ENCODE measurements at regions of chr15 and their contacts with region 1.

Region 1: GRCh38 chr15:78859971-78860732 is 12.5 kb upstream of the MORF4L1 start:
- DNase-seq: peak; percentile 88
- ATAC-seq: peak; percentile 79
- H3K4me3 Mint-ChIP-seq: peak overlapping the region; percentile 77
- H3K27ac Mint-ChIP-seq: peak overlapping the region; percentile 78
- H3K4me1 Mint-ChIP-seq: peaks cover 8% of the 10 kb centered on the region
- H3K27me3 Mint-ChIP-seq: no peaks in the 10 kb centered on the region

Region 2: DNA sequence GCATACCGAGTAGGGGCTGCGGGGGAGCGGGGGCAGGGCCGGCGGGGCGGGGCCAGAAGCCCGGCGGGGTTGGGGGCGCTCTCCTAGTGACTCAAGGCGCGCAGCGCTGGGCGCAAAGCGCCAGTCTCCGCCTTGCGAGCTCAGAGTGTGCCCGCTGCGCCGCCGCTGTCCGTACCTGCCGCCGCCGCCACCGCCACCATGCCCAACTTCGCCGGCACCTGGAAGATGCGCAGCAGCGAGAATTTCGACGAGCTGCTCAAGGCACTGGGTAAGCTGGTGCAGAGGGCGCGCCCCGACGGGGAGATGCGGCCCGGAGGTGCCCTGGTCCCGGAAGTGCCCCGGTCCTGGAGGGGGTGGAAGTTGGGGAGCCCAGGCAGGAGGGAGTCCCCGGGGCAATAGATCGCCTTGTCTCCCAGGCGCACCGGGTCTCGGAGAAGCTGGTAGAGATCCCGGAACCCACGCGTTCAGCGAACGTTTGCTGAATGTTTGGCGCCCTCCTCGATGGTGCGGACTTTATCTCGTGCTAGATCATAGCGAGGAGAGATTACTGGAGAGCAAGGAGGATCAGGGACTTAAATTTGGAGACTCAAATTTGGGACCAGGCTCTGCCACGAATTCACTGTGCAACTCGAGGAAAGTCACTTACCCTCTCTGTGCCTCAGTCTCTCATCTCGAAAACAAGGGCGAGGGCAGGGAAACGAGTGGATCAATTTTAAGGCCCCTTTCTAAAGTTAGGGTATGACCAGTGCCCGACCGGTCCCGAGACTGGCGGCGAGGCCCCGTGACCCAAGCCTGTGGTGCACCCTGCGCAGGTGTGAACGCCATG is 519.7 kb before region 1 on chr15 and contains the start of gene CRABP1:
- CTCF ChIA-PET with region 1: no interaction called
- POLR2A ChIA-PET with region 1: no interaction called
- intact Hi-C with region 1: no loop called
- DNase-seq: peak; percentile 50
- ATAC-seq: peak; percentile 39
- H3K4me3 Mint-ChIP-seq: peak within 1 kb of the TSS; percentile 11
- H3K27ac Mint-ChIP-seq: no peak within 1 kb of the TSS
- H3K4me1 Mint-ChIP-seq: peaks cover 3% of the 10 kb centered on the region
- H3K27me3 Mint-ChIP-seq: peaks cover 47% of the 10 kb centered on the region
- total RNA-seq, gene CRABP1: 0.90 to 0.96 TPM

Region 3: DNA sequence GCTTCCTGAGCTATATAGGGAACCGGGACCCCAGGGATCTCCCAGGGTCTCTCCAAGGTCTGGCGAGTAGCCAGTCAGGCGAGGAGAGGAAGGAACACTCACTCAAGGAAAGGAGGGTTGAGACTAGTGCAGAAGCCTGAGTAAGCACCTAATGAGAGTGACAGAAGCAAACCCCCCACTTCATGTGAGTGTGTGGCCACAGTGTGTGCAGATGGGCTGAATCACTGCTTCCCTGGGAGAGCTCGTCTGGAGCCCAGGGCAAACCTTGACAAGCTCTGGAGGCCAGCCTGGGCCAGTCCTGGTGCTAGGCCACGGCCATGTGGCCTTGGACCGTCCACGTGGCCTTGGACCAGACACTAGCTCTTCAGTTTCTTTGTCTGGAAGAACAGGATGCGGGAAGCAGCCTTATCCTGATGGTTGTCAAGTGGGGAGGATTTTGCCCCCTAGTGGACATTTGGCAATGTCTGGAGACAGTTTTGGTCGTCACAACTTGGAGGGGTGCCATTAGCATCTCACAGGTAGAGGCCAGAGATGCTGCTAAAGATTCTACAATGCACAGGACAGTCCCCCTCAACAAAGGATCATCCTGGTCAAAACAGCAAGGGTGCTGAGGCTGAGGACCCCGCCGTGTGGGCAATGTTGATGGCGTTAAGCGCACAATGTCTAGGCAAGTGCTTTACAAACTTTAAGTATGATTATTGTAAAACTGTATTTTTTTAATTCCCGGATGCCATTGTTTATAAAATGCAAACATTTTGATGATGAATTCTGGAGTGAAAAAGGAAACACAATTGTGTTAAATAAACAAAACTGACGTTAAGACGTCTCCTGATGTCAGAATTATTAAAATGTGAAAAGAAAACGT is 119.5 kb after region 1 on chr15:
- CTCF ChIA-PET with region 1: no interaction called
- POLR2A ChIA-PET with region 1: no interaction called
- intact Hi-C with region 1: loop called in 1 of 2 experiments (anchors 5 kb)
- DNase-seq: peak; percentile 58
- ATAC-seq: peak; percentile 55
- H3K4me3 Mint-ChIP-seq: no peak overlapping the region
- H3K27ac Mint-ChIP-seq: no peak overlapping the region
- H3K4me1 Mint-ChIP-seq: peaks cover 2% of the 10 kb centered on the region
- H3K27me3 Mint-ChIP-seq: peaks cover 5% of the 10 kb centered on the region